Calu3 (cell line): ENCODE measurements at regions of chr3 and their contacts with region 1.

Region 1: GRCh38 chr3:118244761-118245160 is 789.9 kb downstream of the IGSF11 start:
- DNase-seq: no peak
- H3K4me3 Mint-ChIP-seq: no peak overlapping the region
- H3K27ac Mint-ChIP-seq: no peak overlapping the region
- H3K4me1 Mint-ChIP-seq: no peaks in the 10 kb centered on the region
- H3K27me3 Mint-ChIP-seq: no peaks in the 10 kb centered on the region
- CTCF ChIP-seq: no peak

Region 2: GRCh38 chr3:118277814-118278213 is 33.1 kb after region 1 on chr3:
- CTCF ChIA-PET with region 1: no interaction called
- intact Hi-C with region 1: loop called (anchors 1 kb)
- DNase-seq: no peak
- H3K4me3 Mint-ChIP-seq: no peak overlapping the region
- H3K27ac Mint-ChIP-seq: no peak overlapping the region
- H3K4me1 Mint-ChIP-seq: no peaks in the 10 kb centered on the region
- H3K27me3 Mint-ChIP-seq: no peaks in the 10 kb centered on the region
- CTCF ChIP-seq: no peak